Activated B cell treated with CpG ODN at 0.5 μM for 24 hours (primary cell): ENCODE measurements at regions of chr22 and their contacts with region 1.

Region 1: GRCh38 chr22:23750714-23751440 is at the start of gene ZNF70:
- DNase-seq: peak; percentile 90
- ATAC-seq: peak; percentile 58
- H3K4me3 Mint-ChIP-seq: peak within 1 kb of the TSS; percentile 87
- H3K27ac Mint-ChIP-seq: peak within 1 kb of the TSS; percentile 95
- H3K4me1 Mint-ChIP-seq: peaks cover 62% of the 10 kb centered on the region
- H3K27me3 Mint-ChIP-seq: no peaks in the 10 kb centered on the region
- CTCF ChIP-seq: no peak
- total RNA-seq, gene ZNF70: 4.0 and 4.9 TPM in 2 replicates

Region 2: GRCh38 chr22:23696326-23696851 is 54.5 kb before region 1 on chr22:
- CTCF ChIA-PET with region 1: no interaction called
- POLR2A ChIA-PET with region 1: interaction called, 19 read pairs
- intact Hi-C with region 1: loop called (anchors 1 kb)
- DNase-seq: peak; percentile 52
- ATAC-seq: peak; percentile 99
- H3K4me3 Mint-ChIP-seq: peak overlapping the region; percentile 75
- H3K27ac Mint-ChIP-seq: peak overlapping the region; percentile 95
- H3K4me1 Mint-ChIP-seq: peaks cover 27% of the 10 kb centered on the region
- H3K27me3 Mint-ChIP-seq: no peaks in the 10 kb centered on the region
- CTCF ChIP-seq: no peak

Region 3: GRCh38 chr22:23737696-23738095 is 13.2 kb before region 1 on chr22:
- CTCF ChIA-PET with region 1: interaction called, 3 read pairs
- POLR2A ChIA-PET with region 1: interaction called, 11 read pairs
- intact Hi-C with region 1: no loop called
- DNase-seq: no peak
- ATAC-seq: no peak
- H3K4me3 Mint-ChIP-seq: no peak overlapping the region
- H3K27ac Mint-ChIP-seq: no peak overlapping the region
- H3K4me1 Mint-ChIP-seq: no peaks in the 10 kb centered on the region
- H3K27me3 Mint-ChIP-seq: no peaks in the 10 kb centered on the region
- CTCF ChIP-seq: no peak

Region 4: GRCh38 chr22:23800297-23801237 is 49.7 kb after region 1 on chr22:
- CTCF ChIA-PET with region 1: interaction called, 3 read pairs
- POLR2A ChIA-PET with region 1: interaction called, 46 read pairs
- intact Hi-C with region 1: loop called (anchors 1 kb)
- DNase-seq: peak; percentile 68
- ATAC-seq: peak; percentile 77
- H3K4me3 Mint-ChIP-seq: peak overlapping the region; percentile 49
- H3K27ac Mint-ChIP-seq: peak overlapping the region; percentile 97
- H3K4me1 Mint-ChIP-seq: peaks cover 78% of the 10 kb centered on the region
- H3K27me3 Mint-ChIP-seq: no peaks in the 10 kb centered on the region
- CTCF ChIP-seq: no peak

Region 5: DNA sequence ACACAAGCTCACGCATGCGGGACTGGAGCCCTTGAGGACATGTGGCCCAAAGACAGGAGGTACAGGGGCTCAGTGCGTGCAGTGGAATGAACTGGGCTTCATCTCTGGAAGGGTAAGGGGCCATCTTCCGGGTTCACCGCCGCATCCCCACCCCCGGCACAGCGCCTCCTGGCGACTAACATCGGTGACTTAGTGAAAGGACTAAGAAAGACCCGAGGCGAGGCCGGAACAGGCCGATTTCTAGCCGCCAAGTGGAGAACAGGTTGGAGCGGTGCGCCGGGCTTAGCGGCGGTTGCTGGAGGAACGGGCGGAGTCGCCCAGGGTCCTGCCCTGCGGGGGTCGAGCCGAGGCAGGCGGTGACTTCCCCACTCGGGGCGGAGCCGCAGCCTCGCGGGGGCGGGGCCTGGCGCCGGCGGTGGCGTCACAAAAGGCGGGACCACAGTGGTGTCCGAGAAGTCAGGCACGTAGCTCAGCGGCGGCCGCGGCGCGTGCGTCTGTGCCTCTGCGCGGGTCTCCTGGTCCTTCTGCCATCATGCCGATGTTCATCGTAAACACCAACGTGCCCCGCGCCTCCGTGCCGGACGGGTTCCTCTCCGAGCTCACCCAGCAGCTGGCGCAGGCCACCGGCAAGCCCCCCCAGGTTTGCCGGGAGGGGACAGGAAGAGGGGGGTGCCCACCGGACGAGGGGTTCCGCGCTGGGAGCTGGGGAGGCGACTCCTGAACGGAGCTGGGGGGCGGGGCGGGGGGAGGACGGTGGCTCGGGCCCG is 143.2 kb after region 1 on chr22 and contains the start of gene MIF:
- CTCF ChIA-PET with region 1: no interaction called
- POLR2A ChIA-PET with region 1: interaction called, 5 read pairs
- intact Hi-C with region 1: loop called (anchors 1 kb)
- DNase-seq: peak; percentile 100
- ATAC-seq: peak; percentile 88
- H3K4me3 Mint-ChIP-seq: peak within 1 kb of the TSS; percentile 96
- H3K27ac Mint-ChIP-seq: peak within 1 kb of the TSS; percentile 96
- H3K4me1 Mint-ChIP-seq: peaks cover 25% of the 10 kb centered on the region
- H3K27me3 Mint-ChIP-seq: no peaks in the 10 kb centered on the region
- CTCF ChIP-seq: peak; percentile 44
- total RNA-seq, gene MIF: 308 and 349 TPM in 2 replicates